Tibial artery (tissue), 4 donors: ENCODE measurements at regions of chr6 and their contacts with region 1.

Region 1: DNA sequence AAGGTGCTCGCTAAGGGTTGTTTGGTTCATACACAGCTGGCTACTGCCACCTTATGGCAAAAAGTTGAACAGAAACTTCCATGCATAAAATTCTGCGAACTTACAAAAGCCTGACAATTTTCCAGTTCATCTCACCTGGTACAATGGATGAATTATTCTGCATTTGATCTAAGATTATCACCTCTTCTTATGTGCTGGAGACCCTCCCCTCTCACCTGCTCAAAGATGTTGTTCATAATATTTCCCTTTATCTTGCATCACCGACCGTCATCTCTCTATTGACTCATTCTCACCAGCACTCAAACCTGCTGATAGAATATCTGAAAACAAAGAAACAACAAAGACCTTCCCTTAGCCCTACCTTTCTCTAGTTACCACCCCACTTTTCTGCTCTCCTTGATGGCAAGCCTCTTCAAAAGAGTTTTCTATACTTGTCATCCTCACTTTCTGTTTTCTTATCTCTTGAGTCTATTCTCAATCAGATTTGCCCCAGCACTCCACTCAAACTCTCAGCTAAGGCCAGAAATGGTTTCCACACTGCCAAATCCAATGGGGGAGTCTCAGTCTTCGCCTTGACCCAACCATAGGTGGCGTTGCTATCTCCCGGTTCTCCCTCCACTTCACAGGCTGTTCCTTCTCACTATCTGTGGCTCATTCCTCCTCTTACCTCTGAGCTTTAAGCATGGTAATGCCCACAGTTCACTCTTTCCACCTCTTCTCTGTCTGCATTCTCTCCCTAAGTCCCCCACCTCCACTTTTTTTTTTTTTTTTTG is 25.8 kb downstream of the SNRNP48 start:
- DNase-seq: no peak
- H3K4me3 ChIP-seq: no peak overlapping the region
- H3K27ac ChIP-seq: no peak overlapping the region
- H3K4me1 ChIP-seq: peaks cover 0 to 4% (median 1%) of the 10 kb centered on the region in 4 donors
- H3K27me3 ChIP-seq: no peaks in the 10 kb centered on the region
- CTCF ChIP-seq: peak; percentile 68 to 71

Region 2: GRCh38 chr6:7276199-7276524 is 339.6 kb before region 1 on chr6:
- intact Hi-C with region 1: loop called (anchors 5 kb)
- DNase-seq: no peak
- H3K4me3 ChIP-seq: no peak overlapping the region
- H3K27ac ChIP-seq: no peak overlapping the region
- H3K4me1 ChIP-seq: peaks cover 0 to 8% (median 0%) of the 10 kb centered on the region in 4 donors
- H3K27me3 ChIP-seq: no peaks in the 10 kb centered on the region
- CTCF ChIP-seq: no peak

Region 3: DNA sequence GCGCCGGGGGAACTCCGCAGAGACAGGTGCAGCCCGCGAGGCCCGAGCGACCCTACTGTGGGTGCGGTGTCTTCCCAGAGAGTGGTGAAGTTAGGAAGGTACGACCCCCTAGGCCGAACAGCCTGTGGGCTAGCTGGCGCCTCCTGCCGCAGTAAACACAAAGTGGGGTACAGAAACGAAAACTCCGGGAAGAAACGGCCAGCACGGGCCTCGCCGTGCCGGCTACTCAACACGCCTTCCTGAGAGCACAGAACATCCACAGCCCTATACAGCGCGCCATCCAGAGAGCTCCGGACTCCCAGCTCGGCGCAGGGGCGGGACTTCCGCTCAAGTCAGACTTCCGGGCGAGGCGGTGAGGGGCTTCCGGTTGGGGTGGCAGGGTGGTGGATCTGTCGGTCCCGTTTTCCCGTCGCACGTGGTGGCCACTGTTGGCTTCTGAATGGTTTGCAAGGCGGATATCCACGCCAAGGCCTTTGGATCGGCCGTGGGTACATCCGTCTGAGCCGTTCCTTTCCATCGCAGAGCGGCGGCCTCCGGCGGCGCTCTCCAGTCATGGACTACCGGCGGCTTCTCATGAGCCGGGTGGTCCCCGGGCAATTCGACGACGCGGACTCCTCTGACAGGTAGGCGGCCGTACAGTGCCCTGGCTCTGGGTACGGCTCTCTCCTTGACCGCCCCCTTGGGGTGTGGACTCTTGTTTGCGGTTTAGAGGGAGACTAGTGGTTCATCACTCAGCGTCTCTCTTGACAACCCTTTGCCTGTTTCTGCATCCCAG is 226.2 kb before region 1 on chr6 and contains the starts of genes CAGE1 and RIOK1:
- intact Hi-C with region 1: loop called (anchors 5 kb)
- DNase-seq: peak; percentile 95 to 97
- H3K4me3 ChIP-seq: peak within 1 kb of the TSS; percentile 85 to 87
- H3K27ac ChIP-seq: peak within 1 kb of the TSS; percentile 86 to 94
- H3K4me1 ChIP-seq: peaks cover 0 to 26% (median 9%) of the 10 kb centered on the region in 4 donors
- H3K27me3 ChIP-seq: no peaks in the 10 kb centered on the region
- CTCF ChIP-seq: peak in 1 of 2 experiments; percentile 11